ENCODE measurements at regions of chr1 and their contacts with region 1.

Region 1: GRCh38 chr1:68221621-68222373 is 10.5 kb downstream of the WLS start:
- DNase-seq: peak; percentile 22
- H3K4me3 Mint-ChIP-seq: peak overlapping the region; percentile 45
- H3K27ac Mint-ChIP-seq: peak overlapping the region; percentile 83
- H3K4me1 Mint-ChIP-seq: peaks cover 32% of the 10 kb centered on the region
- H3K27me3 Mint-ChIP-seq: no peaks in the 10 kb centered on the region
- CTCF ChIP-seq: no peak

Region 2: DNA sequence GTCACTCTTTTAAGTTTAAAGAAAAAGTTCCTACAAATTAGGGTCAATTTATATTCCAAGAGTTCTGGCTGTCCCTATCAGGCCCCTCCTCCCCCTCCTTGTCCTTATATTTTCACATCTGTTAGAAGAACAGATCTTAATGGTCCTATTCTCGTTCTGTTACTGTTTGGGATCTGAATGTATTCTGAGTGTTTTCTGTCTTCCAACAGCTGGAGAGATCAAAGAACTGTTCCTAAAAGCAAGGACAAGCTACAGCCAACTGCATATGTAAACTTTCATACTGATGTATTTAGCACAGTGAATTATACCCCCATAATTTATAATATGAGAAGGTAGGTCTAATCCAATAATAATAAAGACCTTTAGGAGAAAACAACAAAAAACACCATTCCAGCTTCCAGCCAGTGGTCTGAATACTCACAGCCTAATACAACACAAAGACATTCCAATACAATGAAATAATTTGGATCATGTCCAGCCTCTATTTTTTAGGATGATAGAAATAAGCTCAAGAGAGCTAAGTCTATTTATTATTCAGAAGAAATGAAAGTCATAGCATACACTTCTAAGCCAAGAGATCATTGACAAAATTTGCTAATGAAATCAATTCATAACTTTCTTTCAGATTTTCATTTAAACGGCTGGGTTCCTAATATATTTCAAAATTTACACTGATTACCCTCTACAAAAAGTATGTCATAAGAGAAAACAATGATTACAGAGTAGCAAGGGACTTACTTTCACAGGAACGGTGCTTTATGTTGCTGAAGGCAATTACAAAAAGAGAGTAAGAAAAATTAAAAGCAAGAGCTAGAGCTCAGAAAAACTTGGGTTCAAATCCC is 14.7 kb before region 1 on chr1:
- CTCF ChIA-PET with region 1: no interaction called
- POLR2A ChIA-PET with region 1: interaction called, 14 read pairs
- intact Hi-C with region 1: no loop called
- DNase-seq: peak; percentile 36
- H3K4me3 Mint-ChIP-seq: no peak overlapping the region
- H3K27ac Mint-ChIP-seq: no peak overlapping the region
- H3K4me1 Mint-ChIP-seq: peaks cover 22% of the 10 kb centered on the region
- H3K27me3 Mint-ChIP-seq: no peaks in the 10 kb centered on the region
- CTCF ChIP-seq: no peak

Region 3: DNA sequence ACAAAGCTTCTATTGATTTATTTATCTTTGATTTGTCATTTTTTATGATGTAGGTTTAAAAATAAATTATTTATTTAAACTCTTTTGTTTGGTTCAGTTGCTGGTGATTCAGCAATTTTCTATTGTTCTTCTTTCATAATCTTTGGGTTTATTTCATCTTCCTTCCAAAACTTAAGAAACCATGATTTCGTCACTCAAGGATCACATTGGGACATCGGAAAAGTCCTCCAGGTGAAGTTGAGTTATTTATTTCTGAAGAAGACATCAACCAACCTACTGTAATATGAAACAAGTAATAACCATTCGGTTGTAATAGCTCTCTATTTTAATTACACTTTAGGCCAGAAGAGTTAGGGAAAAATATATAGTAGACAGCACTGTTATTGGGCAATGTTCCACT is 33.5 kb after region 1 on chr1:
- CTCF ChIA-PET with region 1: no interaction called
- POLR2A ChIA-PET with region 1: no interaction called
- intact Hi-C with region 1: no loop called
- DNase-seq: peak; percentile 69
- H3K4me3 Mint-ChIP-seq: no peak overlapping the region
- H3K27ac Mint-ChIP-seq: no peak overlapping the region
- H3K4me1 Mint-ChIP-seq: no peaks in the 10 kb centered on the region
- H3K27me3 Mint-ChIP-seq: no peaks in the 10 kb centered on the region
- CTCF ChIP-seq: no peak

Measured in MCF 10A (cell line).